ENCODE measurements at regions of chr1 and their contacts with region 1.

Region 1: GRCh38 chr1:175783126-175783722 is 39.8 kb upstream of the TNR start:
- DNase-seq: no peak
- ATAC-seq: peak in 2 of 4 donors; percentile 28 to 47
- H3K4me3 ChIP-seq: no peak overlapping the region
- H3K27ac ChIP-seq: no peak overlapping the region
- H3K4me1 ChIP-seq: peaks cover 0 to 10% (median 0%) of the 10 kb centered on the region in 12 donors
- H3K27me3 ChIP-seq: peaks cover 0 to 10% (median 0%) of the 10 kb centered on the region in 9 donors
- CTCF ChIP-seq: no peak
- POLR2A ChIP-seq: no peak

Region 2: GRCh38 chr1:175734642-175735041 is 48.6 kb before region 1 on chr1:
- intact Hi-C with region 1: loop called in 1 of 10 experiments (anchors 5 kb)
- DNase-seq: no peak
- ATAC-seq: no peak
- H3K4me3 ChIP-seq: no peak overlapping the region
- H3K27ac ChIP-seq: no peak overlapping the region
- H3K4me1 ChIP-seq: no peaks in the 10 kb centered on the region
- H3K27me3 ChIP-seq: peaks cover 0 to 17% (median 5%) of the 10 kb centered on the region in 9 donors
- CTCF ChIP-seq: no peak
- POLR2A ChIP-seq: no peak

Region 3: DNA sequence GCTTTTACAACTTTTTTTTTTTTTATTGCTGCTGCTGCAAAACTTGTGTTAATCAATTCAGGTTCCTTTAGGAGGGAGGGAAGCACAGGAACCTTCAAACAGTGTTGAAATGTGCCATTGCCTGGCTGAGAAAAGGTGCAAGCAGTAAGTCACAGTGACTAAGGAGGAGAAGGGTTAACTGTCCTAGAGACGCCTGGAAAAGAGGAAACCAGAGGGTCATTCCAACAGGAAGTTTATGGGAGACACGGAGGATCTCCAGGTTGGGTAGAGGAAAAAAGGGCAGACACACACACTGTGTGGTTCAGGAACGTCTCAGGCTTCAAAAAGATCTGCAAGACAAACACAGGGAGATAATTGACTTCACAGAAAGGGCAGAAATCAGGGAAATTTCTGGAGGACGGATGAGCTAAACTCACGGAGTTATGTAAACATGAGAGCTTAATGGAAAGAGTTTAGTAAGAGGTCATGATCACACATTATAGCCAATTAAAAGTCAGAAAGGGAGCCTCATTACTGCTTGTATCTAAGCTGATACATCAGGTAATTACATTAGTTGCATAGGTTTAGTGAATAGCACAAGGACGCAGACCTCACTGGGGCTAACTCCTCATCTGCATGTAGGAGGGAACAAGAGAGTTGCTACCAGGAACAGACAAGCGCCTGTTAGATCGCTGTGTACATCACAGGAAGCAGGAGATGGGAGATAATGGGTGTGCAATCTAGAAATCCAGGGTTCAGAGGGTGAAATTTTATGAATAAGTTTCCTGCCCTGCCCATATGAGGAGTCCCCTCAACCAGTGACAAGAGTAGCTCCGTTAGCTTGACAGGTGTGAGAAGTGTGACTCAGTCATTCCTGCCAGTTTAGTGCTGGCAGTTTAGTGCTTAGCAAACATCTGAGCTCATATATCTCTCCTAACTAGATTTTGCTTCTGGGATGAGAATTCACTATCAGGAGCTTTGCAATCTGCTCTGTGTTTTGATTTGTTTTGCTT is 56.8 kb after region 1 on chr1:
- intact Hi-C with region 1: no loop called
- DNase-seq: no peak
- ATAC-seq: no peak
- H3K4me3 ChIP-seq: no peak overlapping the region
- H3K27ac ChIP-seq: no peak overlapping the region
- H3K4me1 ChIP-seq: no peaks in the 10 kb centered on the region
- H3K27me3 ChIP-seq: peaks cover 0 to 14% (median 0%) of the 10 kb centered on the region in 9 donors
- CTCF ChIP-seq: no peak
- POLR2A ChIP-seq: no peak

Region 4: DNA sequence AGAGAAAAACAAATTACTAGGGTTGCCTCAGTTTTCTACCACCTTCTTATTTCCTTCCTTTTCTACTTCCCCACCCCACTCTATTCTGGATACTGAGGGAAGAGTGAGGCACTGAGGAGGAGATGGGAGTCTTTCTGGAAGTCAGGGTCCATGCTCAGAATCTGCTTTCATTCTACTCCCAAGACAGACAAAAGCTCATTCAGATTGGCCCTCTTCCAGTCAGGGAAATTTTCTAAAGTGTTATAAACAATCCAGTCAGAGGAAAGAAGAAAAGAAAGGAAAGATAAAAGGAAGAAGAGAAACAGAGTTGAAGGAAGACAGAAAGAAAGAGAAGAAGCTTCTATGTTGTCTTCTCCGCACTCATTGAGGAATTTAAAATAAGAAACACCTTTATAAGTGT is 195.3 kb after region 1 on chr1:
- intact Hi-C with region 1: no loop called
- DNase-seq: no peak
- ATAC-seq: no peak
- H3K4me3 ChIP-seq: no peak overlapping the region
- H3K27ac ChIP-seq: no peak overlapping the region
- H3K4me1 ChIP-seq: peaks cover 0 to 21% (median 2%) of the 10 kb centered on the region in 12 donors
- H3K27me3 ChIP-seq: no peaks in the 10 kb centered on the region
- CTCF ChIP-seq: no peak
- POLR2A ChIP-seq: no peak

Measured in heart left ventricle (tissue), 16 donors.